HEK293T (cell line): ENCODE measurements at regions of chrX and their contacts with region 1.

Region 1: GRCh38 chrX:130079824-130080406 is 30.4 kb downstream of the ELF4 start:
- DNase-seq: peak; percentile 83

Region 2: DNA sequence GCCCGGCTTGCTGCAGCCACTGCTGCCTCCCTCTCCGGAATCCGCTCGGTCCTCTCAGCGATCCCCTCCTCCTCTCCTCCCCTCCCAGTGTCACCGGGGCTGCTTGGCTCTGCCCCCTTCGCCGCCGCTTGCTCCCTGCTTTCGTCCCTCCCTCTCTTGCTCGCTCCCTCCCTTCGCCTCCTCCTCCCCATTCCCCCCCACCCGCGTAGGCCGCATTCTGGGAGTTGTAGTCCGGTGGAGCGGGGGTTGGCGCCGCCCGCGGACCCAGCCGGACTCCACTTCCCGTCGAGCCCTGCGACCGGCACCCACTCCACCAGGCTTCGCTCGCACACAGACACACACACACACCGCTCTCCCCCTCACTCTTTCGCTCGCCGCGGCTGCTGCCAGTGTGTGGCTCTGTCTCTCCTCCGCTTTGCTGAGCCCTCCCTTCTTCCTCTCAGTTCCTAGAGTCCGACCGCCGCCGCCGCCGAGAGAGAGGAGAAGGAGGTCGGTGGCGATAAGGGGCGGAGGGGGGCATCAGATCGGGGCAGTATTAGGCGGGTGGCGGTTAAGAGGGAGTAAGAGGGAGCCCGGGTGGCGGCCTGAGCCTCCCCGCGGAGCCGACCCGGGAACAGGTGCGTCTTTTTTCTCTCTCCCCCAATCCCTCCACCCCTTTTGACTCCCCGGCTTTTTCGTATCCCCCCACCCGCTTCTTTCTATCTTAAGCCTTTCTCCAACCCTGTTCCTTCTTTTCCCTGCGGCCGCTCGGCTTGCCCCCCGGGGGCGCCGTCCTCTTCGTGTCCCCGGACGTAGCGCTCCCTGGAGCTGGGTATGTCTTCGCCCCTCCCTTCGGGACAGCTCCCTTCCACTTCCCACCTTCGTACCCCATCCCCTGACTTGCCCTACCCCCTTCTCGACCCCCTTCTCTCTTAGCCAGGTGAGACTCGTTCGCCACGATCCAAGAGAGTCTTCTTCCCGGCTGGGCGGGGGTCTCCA is 97.4 kb before region 1 on chrX and contains the start of gene BCORL1:
- CTCF ChIA-PET with region 1: no interaction called
- POLR2A ChIA-PET with region 1: no interaction called
- DNase-seq: peak; percentile 98

Region 3: DNA sequence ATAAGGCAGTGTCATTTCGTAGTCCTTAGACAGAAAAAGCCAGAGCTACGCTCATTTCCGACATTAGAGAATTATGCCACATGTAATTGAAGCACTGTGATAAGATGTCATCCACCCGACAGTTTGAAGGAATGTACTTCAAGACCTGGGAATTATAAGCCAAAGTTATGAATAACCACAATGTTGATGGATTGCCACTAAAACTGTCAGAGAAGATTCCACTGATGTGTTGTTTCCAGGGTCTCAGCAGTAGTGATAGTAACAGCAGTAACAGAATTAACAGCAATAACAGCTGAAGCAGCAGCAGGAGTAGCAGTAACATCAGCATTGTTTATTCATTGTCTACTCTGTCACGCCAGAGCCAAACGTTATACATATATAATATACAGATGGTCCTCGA is 116.6 kb after region 1 on chrX:
- CTCF ChIA-PET with region 1: interaction called, 11 read pairs
- POLR2A ChIA-PET with region 1: no interaction called
- DNase-seq: no peak